ENCODE measurements at regions of chr4 and their contacts with region 1.

Region 1: DNA sequence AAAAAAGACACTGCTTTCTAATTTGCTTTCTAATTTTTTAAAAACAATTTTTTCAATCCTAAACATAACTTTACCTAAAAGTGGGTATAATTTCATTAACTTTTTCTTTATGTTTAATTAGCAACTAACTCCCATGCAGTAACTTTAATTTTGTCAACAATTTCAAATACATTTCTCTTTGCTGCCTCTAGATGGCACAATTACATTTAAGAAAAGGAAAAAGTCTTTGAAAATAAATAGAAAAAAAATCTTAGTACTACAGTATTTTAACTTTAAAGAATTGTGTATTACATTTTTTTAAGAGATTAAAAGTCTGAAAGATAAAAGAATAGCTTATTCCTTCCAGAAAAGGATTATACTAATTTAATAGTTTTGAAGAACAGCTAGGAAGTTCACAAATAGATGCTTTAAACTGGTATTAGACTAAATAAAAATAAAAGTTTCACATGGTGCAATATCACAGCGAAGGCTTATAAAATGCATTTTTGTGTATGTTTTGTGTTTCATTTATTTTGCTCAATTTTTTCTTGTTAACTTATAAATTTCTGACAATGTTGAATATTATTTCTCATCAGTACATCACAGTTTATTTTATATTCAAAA is 105.1 kb downstream of the ADGRA3 start:
- DNase-seq: no peak
- H3K4me3 ChIP-seq: no peak overlapping the region
- H3K27ac ChIP-seq: no peak overlapping the region
- H3K27me3 ChIP-seq: no peaks in the 10 kb centered on the region
- CTCF ChIP-seq: peak in 55 of 56 donors; percentile 48 to 84 (median 68)

Region 2: GRCh38 chr4:22473268-22473667 is 62.5 kb after region 1 on chr4:
- intact Hi-C with region 1: no loop called
- DNase-seq: no peak
- H3K4me3 ChIP-seq: no peak overlapping the region
- H3K27ac ChIP-seq: no peak overlapping the region
- H3K27me3 ChIP-seq: no peaks in the 10 kb centered on the region
- CTCF ChIP-seq: no peak

Region 3: DNA sequence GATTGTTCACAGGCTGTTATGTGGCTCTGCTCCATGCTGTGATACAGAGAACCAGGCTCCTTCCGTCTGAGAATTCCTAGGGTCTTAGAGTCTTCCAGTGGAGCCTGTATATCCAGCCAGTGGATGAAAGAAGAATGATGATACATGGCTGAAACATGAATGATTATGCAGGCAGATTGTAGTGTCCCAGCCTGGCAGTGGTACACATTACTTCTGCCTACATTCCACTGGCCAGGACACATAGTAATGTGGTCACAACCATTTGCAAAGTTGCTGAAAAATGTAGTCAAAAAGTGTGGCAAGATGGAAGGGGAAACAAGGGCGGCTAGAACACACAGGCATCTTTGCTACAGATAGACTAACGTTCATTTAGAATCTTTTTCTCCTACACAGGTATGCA is 277.5 kb after region 1 on chr4:
- intact Hi-C with region 1: loop called (anchors 2 to 5 kb)
- DNase-seq: no peak
- H3K4me3 ChIP-seq: no peak overlapping the region
- H3K27ac ChIP-seq: no peak overlapping the region
- H3K27me3 ChIP-seq: peaks cover 0 to 24% (median 0%) of the 10 kb centered on the region in 45 donors
- CTCF ChIP-seq: no peak